OCI-LY7 (cell line): ENCODE measurements at regions of chr12 and their contacts with region 1.

Region 1: GRCh38 chr12:50986966-50987737 is 34.8 kb downstream of the HIGD1C start:
- DNase-seq: peak; percentile 72
- H3K4me3 ChIP-seq: no peak overlapping the region
- H3K27ac ChIP-seq: no peak overlapping the region
- H3K4me1 ChIP-seq: no peaks in the 10 kb centered on the region
- CTCF ChIP-seq: peak; percentile 89

Region 2: GRCh38 chr12:50520416-50521207 is 466.5 kb before region 1 on chr12:
- CTCF ChIA-PET with region 1: no interaction called
- POLR2A ChIA-PET with region 1: no interaction called
- intact Hi-C with region 1: no loop called
- DNase-seq: no peak
- H3K4me3 ChIP-seq: no peak overlapping the region
- H3K27ac ChIP-seq: peak overlapping the region; percentile 17
- H3K4me1 ChIP-seq: peaks cover 34% of the 10 kb centered on the region
- CTCF ChIP-seq: no peak

Region 3: GRCh38 chr12:50763639-50764285 is 223.4 kb before region 1 on chr12 and contains the start of gene ATF1:
- CTCF ChIA-PET with region 1: interaction called, 5 read pairs
- POLR2A ChIA-PET with region 1: interaction called, 4 read pairs
- intact Hi-C with region 1: loop called (anchors 2 kb)
- DNase-seq: peak; percentile 94
- H3K4me3 ChIP-seq: peak within 1 kb of the TSS; percentile 82
- H3K27ac ChIP-seq: peak within 1 kb of the TSS; percentile 84
- H3K4me1 ChIP-seq: peaks cover 32% of the 10 kb centered on the region
- CTCF ChIP-seq: no peak
- total RNA-seq, gene ATF1: 47.4 and 83.3 TPM in 2 replicates

Region 4: GRCh38 chr12:50825372-50825838 is 161.7 kb before region 1 on chr12:
- CTCF ChIA-PET with region 1: no interaction called
- POLR2A ChIA-PET with region 1: interaction called, 4 read pairs
- intact Hi-C with region 1: loop called (anchors 1 kb)
- DNase-seq: peak; percentile 76
- H3K4me3 ChIP-seq: no peak overlapping the region
- H3K27ac ChIP-seq: no peak overlapping the region
- H3K4me1 ChIP-seq: no peaks in the 10 kb centered on the region
- CTCF ChIP-seq: peak; percentile 77

Region 5: DNA sequence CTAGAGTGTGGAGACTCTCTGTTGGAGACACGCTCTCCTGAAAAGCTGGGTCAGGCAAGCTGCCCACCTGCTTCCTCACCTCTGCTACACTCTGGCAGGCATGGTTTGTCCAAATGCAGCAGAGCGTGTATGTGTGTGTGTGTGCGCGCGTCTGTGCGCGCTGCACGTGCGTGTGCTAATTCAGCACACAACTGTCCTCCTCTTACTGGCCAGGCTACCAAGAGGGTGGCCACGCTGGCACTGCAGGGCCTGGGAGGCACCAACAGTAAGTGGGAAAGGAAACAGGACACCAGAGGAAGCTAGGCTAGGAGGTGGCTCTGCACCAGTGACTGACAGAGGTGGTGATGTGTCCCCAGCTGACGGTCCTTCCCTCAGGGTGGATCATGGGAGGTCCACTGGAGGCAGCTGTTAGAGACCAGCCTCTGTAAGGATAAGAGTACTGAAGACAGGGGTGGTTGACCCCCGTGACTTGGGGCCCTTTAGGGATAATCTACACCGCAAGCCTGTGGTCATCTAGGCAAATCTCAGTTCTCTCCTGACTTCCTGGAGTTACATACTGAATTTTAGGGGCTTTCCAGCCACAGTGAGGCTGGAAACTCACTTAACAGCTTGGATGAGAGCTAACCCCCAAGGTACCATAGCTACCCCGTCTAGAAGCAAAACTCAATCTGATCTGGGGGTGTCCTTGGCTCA is 201.4 kb after region 1 on chr12:
- CTCF ChIA-PET with region 1: no interaction called
- POLR2A ChIA-PET with region 1: interaction called, 11 read pairs
- intact Hi-C with region 1: no loop called
- DNase-seq: peak; percentile 76
- H3K4me3 ChIP-seq: peak overlapping the region; percentile 57
- H3K27ac ChIP-seq: peak overlapping the region; percentile 67
- H3K4me1 ChIP-seq: peaks cover 52% of the 10 kb centered on the region
- CTCF ChIP-seq: no peak

Region 6: DNA sequence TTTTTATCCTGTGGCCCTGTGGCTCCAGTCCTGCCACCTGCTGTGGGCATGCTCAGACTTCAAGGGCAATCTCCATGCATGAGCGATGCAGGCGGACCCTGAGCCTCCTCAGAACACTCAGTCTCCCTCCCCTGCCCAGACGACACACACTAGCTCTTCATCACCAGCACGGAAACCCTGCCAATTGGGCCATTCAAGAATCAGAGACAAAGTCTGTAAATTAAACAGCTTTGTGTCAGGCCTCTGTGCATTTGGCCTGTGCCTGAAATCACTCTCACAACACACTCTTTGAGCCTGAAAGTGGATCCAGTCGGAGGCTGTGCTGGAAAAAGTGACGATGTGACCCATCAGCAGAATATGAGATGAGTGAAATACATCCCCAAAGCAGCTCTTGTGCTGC is 218.2 kb after region 1 on chr12:
- CTCF ChIA-PET with region 1: no interaction called
- POLR2A ChIA-PET with region 1: no interaction called
- intact Hi-C with region 1: no loop called
- DNase-seq: no peak
- H3K4me3 ChIP-seq: no peak overlapping the region
- H3K27ac ChIP-seq: no peak overlapping the region
- H3K4me1 ChIP-seq: no peaks in the 10 kb centered on the region
- CTCF ChIP-seq: no peak